ENCODE measurements at regions of chr11 and their contacts with region 1.

Region 1: DNA sequence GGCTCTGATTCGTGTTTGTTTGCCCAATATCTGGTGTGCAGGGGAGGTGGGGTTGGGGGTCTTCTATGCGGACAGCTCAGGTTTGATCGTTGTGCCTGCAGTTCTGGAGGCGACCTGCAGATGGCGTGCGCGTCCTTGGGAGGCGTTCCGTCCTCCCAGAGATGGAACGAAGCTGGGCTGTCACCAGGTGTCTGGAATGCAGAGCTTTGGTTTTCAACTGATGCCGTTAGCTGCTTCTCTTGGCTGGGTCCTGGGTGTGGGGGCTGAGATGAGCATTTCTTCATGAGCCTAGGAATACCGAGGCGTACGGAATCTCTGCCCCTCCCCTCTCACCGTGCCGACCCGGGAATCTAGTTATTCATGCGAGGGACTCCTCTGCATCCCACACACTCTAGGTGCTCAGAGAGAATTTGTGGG is 98.6 kb downstream of the CEP164 start:
- DNase-seq: peak; percentile 46
- H3K4me3 ChIP-seq: no peak overlapping the region
- H3K27ac ChIP-seq: no peak overlapping the region
- H3K4me1 ChIP-seq: no peaks in the 10 kb centered on the region
- H3K27me3 ChIP-seq: no peaks in the 10 kb centered on the region
- CTCF ChIP-seq: peak; percentile 93 to 96
- POLR2A ChIP-seq: no peak

Region 2: DNA sequence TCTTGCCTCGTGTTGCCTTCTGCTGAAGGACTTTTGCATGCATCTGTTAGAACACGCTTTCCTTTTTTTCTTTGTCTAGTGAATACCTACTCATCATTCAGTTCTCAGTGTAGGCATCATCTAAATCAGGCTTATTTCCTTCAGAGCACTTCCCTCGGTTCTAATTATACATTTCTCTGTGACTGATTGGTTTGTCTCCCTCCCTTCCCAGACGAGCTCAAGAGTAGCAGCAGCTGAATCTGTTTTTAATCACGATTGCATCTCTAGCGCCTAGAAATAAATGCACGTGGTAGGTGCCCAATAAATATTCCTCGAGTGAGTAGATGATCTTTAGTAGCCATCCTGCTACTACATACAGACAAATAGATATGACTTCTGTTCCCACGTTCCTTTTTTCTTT is 92.4 kb before region 1 on chr11:
- CTCF ChIA-PET with region 1: no interaction called
- POLR2A ChIA-PET with region 1: no interaction called
- dilution Hi-C with region 1: no loop called
- intact Hi-C with region 1: no loop called
- DNase-seq: no peak
- H3K4me3 ChIP-seq: no peak overlapping the region
- H3K27ac ChIP-seq: no peak overlapping the region
- H3K4me1 ChIP-seq: peaks cover 11% of the 10 kb centered on the region
- H3K27me3 ChIP-seq: no peaks in the 10 kb centered on the region
- CTCF ChIP-seq: no peak
- POLR2A ChIP-seq: no peak

Region 3: GRCh38 chr11:117384041-117384440 is 42.2 kb before region 1 on chr11:
- CTCF ChIA-PET with region 1: interaction called, 17 read pairs
- POLR2A ChIA-PET with region 1: no interaction called
- dilution Hi-C with region 1: no loop called
- intact Hi-C with region 1: no loop called
- DNase-seq: peak; percentile 36
- H3K4me3 ChIP-seq: no peak overlapping the region
- H3K27ac ChIP-seq: no peak overlapping the region
- H3K4me1 ChIP-seq: peaks cover 13% of the 10 kb centered on the region
- H3K27me3 ChIP-seq: no peaks in the 10 kb centered on the region
- CTCF ChIP-seq: no peak
- POLR2A ChIP-seq: no peak

Region 4: GRCh38 chr11:117410861-117411710 is 15.2 kb before region 1 on chr11:
- CTCF ChIA-PET with region 1: interaction called, 54 read pairs
- POLR2A ChIA-PET with region 1: no interaction called
- dilution Hi-C with region 1: no loop called
- intact Hi-C with region 1: no loop called
- DNase-seq: no peak
- H3K4me3 ChIP-seq: no peak overlapping the region
- H3K27ac ChIP-seq: no peak overlapping the region
- H3K4me1 ChIP-seq: no peaks in the 10 kb centered on the region
- H3K27me3 ChIP-seq: no peaks in the 10 kb centered on the region
- CTCF ChIP-seq: no peak
- POLR2A ChIP-seq: no peak

Region 5: DNA sequence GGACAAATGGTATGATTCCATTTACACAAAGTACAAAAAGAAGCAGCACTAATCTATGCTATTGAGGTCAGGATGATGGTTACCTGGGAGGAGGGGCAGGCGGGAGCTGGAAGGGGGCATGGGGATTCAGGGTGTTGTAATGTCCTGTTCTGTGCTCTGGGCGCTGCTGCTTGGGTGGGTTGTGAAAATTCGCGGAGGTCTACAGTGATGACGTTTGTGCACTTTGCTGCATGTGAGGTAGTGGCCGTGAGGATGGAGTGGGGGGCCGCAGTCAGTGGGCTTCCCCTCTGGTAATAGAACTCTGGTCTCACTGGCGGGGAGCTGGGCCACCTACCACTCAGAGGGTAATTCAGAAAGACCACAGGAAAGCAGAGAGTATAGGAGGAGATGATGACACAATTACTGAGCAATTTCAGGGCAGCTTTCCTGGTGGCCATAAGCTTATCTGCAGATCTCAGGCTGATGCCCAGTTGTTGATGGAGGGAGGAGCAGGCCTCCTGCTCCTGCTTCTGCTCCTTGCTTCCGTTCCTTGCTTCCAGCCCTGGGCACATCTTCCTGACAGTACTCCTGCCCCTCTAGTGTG is 22.9 kb after region 1 on chr11:
- CTCF ChIA-PET with region 1: interaction called, 29 read pairs
- POLR2A ChIA-PET with region 1: no interaction called
- dilution Hi-C with region 1: no loop called
- intact Hi-C with region 1: no loop called
- DNase-seq: no peak
- H3K4me3 ChIP-seq: no peak overlapping the region
- H3K27ac ChIP-seq: no peak overlapping the region
- H3K4me1 ChIP-seq: no peaks in the 10 kb centered on the region
- H3K27me3 ChIP-seq: no peaks in the 10 kb centered on the region
- CTCF ChIP-seq: no peak
- POLR2A ChIP-seq: no peak

Region 6: GRCh38 chr11:117614728-117615127 is 188.5 kb after region 1 on chr11:
- CTCF ChIA-PET with region 1: interaction called, 133 read pairs
- POLR2A ChIA-PET with region 1: no interaction called
- dilution Hi-C with region 1: no loop called
- intact Hi-C with region 1: no loop called
- DNase-seq: no peak
- H3K4me3 ChIP-seq: no peak overlapping the region
- H3K27ac ChIP-seq: no peak overlapping the region
- H3K4me1 ChIP-seq: no peaks in the 10 kb centered on the region
- H3K27me3 ChIP-seq: no peaks in the 10 kb centered on the region
- CTCF ChIP-seq: no peak
- POLR2A ChIP-seq: no peak

Region 7: DNA sequence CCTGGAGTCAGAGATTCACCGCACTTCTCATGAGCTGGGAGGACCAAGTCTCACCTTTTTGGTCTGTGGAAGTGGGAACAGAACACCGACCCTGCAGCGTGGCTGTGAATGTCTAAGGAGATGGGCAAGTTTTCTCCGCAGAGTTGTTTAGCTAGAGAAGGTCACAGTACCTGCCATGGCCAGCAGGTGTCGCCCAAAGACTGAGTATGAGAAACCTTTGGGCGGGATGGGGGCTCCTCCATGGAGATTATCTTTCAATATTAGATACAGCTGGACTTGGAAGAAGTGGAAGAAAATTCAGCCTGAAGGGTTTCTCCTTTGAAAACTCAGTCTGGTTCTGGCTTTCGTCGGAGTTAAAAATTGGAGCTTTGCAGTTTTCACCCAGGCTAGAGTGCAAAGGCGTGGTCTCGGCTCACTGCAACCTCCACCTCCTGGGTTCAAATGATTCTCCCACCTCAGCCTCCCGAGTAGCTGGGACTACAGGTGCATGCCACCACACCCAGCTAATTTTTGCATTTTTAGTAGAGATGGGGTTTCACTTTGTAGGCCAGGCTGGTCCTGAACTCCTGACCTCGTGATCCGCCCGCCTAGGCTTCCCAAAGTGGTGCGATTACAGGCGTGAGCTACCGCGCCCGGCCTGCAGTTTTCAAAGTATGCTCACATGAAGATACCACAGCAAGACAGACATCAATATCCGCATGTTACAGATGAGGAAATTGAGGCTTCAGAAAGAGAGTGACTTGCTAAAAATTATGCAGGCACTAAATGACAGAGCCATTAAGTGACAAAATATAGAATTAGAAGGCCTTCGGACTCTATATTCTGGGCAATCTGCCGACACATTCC is 381.4 kb after region 1 on chr11:
- CTCF ChIA-PET with region 1: interaction called, 53 read pairs
- POLR2A ChIA-PET with region 1: no interaction called
- dilution Hi-C with region 1: no loop called
- intact Hi-C with region 1: no loop called
- DNase-seq: peak; percentile 47
- H3K4me3 ChIP-seq: no peak overlapping the region
- H3K27ac ChIP-seq: no peak overlapping the region
- H3K4me1 ChIP-seq: no peaks in the 10 kb centered on the region
- H3K27me3 ChIP-seq: peaks cover 1 to 5% of the 10 kb centered on the region in 2 experiments
- CTCF ChIP-seq: peak; percentile 81 to 92
- POLR2A ChIP-seq: no peak

Region 8: GRCh38 chr11:117833401-117833891 is 407.2 kb after region 1 on chr11:
- CTCF ChIA-PET with region 1: no interaction called
- POLR2A ChIA-PET with region 1: no interaction called
- dilution Hi-C with region 1: no loop called
- intact Hi-C with region 1: no loop called
- DNase-seq: no peak
- H3K4me3 ChIP-seq: no peak overlapping the region
- H3K27ac ChIP-seq: no peak overlapping the region
- H3K4me1 ChIP-seq: peaks cover 11% of the 10 kb centered on the region
- H3K27me3 ChIP-seq: peaks cover 0 to 9% of the 10 kb centered on the region in 2 experiments
- CTCF ChIP-seq: no peak
- POLR2A ChIP-seq: no peak

Region 9: GRCh38 chr11:118051611-118052461 is 625.6 kb after region 1 on chr11:
- CTCF ChIA-PET with region 1: interaction called, 46 read pairs
- POLR2A ChIA-PET with region 1: no interaction called
- dilution Hi-C with region 1: no loop called
- intact Hi-C with region 1: no loop called
- DNase-seq: no peak
- H3K4me3 ChIP-seq: no peak overlapping the region
- H3K27ac ChIP-seq: no peak overlapping the region
- H3K4me1 ChIP-seq: no peaks in the 10 kb centered on the region
- H3K27me3 ChIP-seq: peaks cover 5 to 7% of the 10 kb centered on the region in 2 experiments
- CTCF ChIP-seq: no peak
- POLR2A ChIP-seq: no peak

Measured in endothelial cell of umbilical vein (primary cell).